Ascending aorta (tissue), 2 donors: ENCODE measurements at regions of chr1 and their contacts with region 1.

Region 1: DNA sequence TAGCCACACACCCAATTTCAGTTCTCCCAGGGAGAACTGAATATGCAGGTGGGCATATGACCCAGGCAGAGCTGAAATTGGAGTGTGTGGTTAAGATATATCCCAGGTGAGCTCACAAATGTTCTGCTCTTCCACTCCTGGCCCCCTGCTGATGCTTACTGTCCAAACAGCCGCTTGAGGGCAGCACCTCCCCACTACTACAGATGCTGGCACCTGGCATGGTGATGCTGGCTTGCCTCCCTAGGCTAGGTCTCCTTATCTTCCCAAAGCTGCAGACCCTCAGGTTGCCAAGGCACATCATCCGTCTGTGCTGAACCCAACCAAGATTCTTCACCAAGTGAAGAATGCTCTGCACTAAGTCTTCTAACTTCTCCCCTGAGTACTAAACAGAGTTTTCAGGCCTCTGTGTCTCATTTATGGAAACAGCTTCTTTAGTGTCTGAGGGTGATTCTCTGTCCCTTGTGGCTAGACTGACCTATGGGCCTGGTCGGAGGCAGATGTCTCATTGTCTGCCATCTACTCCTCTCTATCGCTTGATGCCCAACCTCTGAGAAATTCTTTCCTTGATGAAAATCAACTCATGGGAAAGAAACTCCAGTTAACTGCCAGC is 27.2 kb downstream of the XCL1 start:
- DNase-seq: peak in 1 of 2 donors; percentile 82
- H3K4me3 ChIP-seq: no peak overlapping the region
- H3K27ac ChIP-seq: no peak overlapping the region
- H3K4me1 ChIP-seq: peaks cover 1 to 10% of the 10 kb centered on the region in 2 donors
- H3K27me3 ChIP-seq: no peaks in the 10 kb centered on the region
- CTCF ChIP-seq: peak; percentile 76 to 86 (median 81)

Region 2: DNA sequence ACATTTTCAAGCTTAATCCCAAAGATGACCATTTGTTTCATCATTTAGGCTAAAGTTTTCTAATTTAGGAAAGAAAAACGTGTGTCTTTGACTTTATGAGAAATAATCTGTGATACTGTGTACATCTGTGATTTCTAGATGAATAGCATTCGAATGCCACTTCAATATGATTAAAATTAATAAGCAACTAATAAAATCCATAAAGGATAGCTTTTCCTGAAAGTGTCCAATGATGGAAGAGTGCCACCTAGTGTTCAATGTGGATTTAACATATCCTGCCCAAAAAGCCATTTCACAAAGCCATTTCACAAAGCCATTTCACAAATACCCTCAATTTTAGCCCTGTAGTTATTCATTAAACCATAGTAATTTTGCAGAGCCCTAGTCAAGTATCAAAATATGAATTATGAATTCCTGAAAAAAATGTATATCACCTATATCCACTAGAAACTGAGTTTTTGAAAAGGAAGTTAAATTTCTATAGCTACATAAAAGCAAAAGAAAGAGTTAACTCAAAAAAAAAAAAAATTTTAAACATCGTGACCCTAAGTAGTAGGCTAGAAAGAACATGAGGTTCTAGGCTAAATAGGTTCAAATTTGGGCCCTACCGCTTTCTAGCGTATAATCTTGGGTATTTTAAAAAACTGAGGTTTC is 744.9 kb after region 1 on chr1:
- intact Hi-C with region 1: loop called (anchors 1 kb)
- DNase-seq: no peak
- H3K4me3 ChIP-seq: no peak overlapping the region
- H3K27ac ChIP-seq: no peak overlapping the region
- H3K4me1 ChIP-seq: no peaks in the 10 kb centered on the region
- H3K27me3 ChIP-seq: no peaks in the 10 kb centered on the region
- CTCF ChIP-seq: peak; percentile 49 to 78 (median 65)